ENCODE measurements at regions of chr11 and their contacts with region 1.

Region 1: GRCh38 chr11:72040726-72041441 is 39.5 kb downstream of the NUMA1 start:
- DNase-seq: peak; percentile 96 to 97
- H3K4me3 ChIP-seq: peak overlapping the region; percentile 54 to 79
- H3K27ac ChIP-seq: peak overlapping the region; percentile 95 to 96
- H3K4me1 ChIP-seq: peaks cover 4 to 23% of the 10 kb centered on the region in 2 donors
- H3K27me3 ChIP-seq: no peaks in the 10 kb centered on the region
- CTCF ChIP-seq: no peak
- POLR2A ChIP-seq: peak; percentile 55 to 76

Region 2: GRCh38 chr11:71977743-71978418 is 63.0 kb before region 1 on chr11:
- intact Hi-C with region 1: no loop called
- DNase-seq: peak; percentile 59 to 68
- H3K4me3 ChIP-seq: no peak overlapping the region
- H3K27ac ChIP-seq: no peak overlapping the region
- H3K4me1 ChIP-seq: no peaks in the 10 kb centered on the region
- H3K27me3 ChIP-seq: no peaks in the 10 kb centered on the region
- CTCF ChIP-seq: peak; percentile 69 to 85 (median 75)
- POLR2A ChIP-seq: no peak

Region 3: GRCh38 chr11:72075109-72075508 is 34.2 kb after region 1 on chr11:
- intact Hi-C with region 1: loop called (anchors 5 kb)
- DNase-seq: no peak
- H3K4me3 ChIP-seq: no peak overlapping the region
- H3K27ac ChIP-seq: no peak overlapping the region
- H3K4me1 ChIP-seq: peaks cover 0 to 4% of the 10 kb centered on the region in 2 donors
- H3K27me3 ChIP-seq: no peaks in the 10 kb centered on the region
- CTCF ChIP-seq: no peak
- POLR2A ChIP-seq: no peak

Region 4: DNA sequence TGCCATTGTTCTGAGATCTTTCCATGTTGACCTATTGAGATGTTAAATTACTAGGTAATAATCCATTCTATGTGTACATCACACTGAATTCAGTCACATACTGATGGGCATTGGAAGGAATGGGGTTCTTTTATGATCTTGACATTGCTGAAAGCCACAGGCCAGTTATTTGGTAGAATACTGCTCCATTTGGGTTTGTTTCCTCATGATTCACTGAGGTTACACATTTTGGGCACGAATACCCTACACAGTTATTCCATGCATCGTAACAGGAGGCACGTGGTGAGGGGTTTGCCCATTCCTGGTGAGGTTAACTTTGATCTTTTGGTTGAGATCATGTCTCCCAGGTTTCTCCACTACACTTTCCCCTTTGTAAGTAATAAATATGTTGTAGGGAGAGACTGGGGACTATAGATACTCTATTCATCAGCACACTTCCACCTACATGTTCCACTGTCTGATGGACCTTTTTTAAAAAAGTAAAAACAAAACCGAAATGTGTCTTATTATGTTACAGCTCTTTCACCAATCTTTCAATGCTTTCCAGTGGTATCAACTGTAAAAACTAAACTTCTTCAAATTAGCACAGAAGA is 139.0 kb after region 1 on chr11:
- intact Hi-C with region 1: no loop called
- DNase-seq: no peak
- H3K4me3 ChIP-seq: no peak overlapping the region
- H3K27ac ChIP-seq: no peak overlapping the region
- H3K4me1 ChIP-seq: no peaks in the 10 kb centered on the region
- H3K27me3 ChIP-seq: no peaks in the 10 kb centered on the region
- CTCF ChIP-seq: no peak
- POLR2A ChIP-seq: no peak